Aorta (tissue), 5 donors: ENCODE measurements at regions of chr13 and their contacts with region 1.

Region 1: DNA sequence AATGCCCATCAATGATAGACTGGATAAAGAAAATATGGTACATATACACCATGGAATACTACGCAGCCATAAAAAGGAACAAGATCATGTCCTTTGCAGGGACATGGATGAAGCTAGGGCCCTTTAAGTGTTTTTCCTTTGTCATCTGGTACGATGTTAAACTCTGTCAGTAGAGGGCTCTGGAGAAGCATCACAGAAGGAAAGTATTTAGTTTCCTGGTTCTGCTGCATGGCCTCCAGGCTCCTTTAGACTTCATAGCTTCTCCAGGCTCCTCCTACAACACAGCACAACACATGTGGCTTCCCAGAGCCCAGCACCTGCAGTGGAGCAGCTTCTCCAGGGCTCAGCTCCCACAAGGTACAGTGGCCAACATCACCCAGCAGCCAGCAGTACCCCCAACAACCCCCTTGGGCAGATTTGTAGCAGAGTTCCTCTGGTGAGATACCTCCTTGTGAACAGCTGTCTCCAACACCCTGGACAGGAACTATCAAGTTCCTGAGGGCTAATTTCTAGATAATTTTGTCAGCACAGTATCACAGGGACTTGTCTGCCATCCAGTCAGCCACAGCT is 63.4 kb downstream of the KCTD12 start:
- DNase-seq: no peak
- ATAC-seq: no peak
- H3K4me3 ChIP-seq: no peak overlapping the region
- H3K27ac ChIP-seq: no peak overlapping the region
- H3K4me1 ChIP-seq: no peaks in the 10 kb centered on the region
- H3K27me3 ChIP-seq: no peaks in the 10 kb centered on the region

Region 2: GRCh38 chr13:76687467-76687866 is 135.3 kb before region 1 on chr13:
- intact Hi-C with region 1: no loop called
- DNase-seq: no peak
- ATAC-seq: no peak
- H3K4me3 ChIP-seq: no peak overlapping the region
- H3K27ac ChIP-seq: no peak overlapping the region
- H3K4me1 ChIP-seq: no peaks in the 10 kb centered on the region
- H3K27me3 ChIP-seq: no peaks in the 10 kb centered on the region

Region 3: DNA sequence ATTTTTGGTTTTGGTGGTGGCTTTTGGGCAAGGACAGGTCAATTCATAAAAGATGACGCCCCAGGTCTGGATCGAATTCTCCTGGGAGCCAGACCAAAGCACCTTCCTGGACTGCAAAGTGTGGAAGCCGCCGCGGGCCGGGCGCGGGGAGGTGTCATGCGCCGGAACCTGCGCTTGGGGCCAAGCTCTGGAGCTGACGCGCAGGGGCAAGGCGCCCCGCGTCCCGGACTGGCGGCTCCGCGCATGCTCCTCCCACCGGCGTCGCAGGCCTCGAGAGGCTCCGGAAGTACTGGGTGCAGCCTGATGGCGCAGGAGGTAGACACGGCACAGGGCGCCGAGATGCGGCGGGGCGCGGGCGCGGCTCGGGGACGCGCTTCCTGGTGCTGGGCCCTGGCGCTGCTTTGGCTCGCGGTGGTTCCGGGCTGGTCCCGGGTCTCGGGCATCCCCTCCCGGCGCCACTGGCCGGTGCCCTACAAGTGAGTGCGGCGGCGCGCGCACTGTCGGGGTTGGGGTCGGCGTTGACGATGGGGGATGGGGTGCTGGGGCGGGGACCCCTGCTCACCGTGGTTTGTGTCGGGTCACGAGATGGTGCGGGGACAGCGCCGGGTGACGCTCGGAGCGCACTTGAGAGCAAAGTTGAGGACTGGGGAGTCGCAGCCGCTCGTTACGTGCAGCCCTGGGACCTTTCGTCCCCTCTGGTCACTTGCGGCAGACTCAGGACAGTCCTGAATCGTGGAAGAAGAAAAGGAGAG is 169.2 kb after region 1 on chr13 and contains the start of gene CLN5:
- intact Hi-C with region 1: loop called in 1 of 2 experiments (anchors 10 kb)
- DNase-seq: peak; percentile 97 to 98
- ATAC-seq: peak; percentile 98
- H3K4me3 ChIP-seq: peak within 1 kb of the TSS; percentile 50 to 71
- H3K27ac ChIP-seq: peak within 1 kb of the TSS; percentile 61 to 62
- H3K4me1 ChIP-seq: no peaks in the 10 kb centered on the region
- H3K27me3 ChIP-seq: no peaks in the 10 kb centered on the region
- total RNA-seq, gene CLN5: 21.4 to 31.7 TPM